ENCODE measurements at regions of chr4 and their contacts with region 1.

Region 1: DNA sequence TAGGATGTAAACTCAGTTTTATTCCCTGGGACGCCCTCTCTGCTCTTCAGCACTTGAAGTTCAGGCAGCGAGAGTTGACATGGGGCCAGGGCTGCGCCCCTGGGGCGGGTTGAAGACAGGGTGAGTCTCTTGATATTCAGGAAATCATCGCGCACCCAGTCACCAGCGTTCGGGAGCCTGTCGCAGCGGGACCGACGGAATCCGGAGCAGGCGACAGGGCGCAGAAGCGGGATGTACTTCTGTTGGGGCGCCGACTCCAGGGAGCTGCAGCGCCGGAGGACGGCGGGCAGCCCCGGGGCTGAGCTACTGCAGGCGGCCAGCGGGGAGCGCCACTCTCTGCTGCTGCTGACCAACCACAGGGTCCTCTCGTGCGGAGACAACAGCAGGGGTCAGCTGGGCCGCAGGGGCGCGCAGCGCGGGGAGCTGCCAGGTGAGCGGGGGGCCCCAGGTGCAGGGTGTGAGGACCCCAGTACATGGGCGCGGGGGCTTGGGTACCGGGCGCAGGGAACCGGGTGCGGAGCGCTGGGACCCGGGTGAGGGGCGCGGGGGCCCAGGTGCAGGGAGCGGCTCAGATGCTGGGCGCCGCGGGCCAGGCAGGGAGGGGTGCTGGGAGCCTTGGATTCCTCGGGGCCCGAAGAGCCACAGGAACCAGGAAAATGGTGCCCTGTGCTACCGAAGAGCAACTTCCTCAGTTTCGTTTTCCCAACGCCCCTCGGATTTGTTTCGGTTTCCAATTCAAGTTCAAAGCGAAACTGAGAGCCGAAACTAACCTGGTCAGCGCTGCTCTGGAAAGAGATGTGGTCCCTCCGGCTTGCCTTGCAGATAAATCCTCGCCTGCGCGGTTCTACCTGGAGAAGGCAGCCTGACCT is at the start of gene HERC6:
- DNase-seq: peak; percentile 95
- H3K4me3 Mint-ChIP-seq: peak within 1 kb of the TSS; percentile 86
- H3K27ac Mint-ChIP-seq: peak within 1 kb of the TSS; percentile 83
- H3K4me1 Mint-ChIP-seq: peaks cover 43% of the 10 kb centered on the region
- H3K27me3 Mint-ChIP-seq: no peaks in the 10 kb centered on the region
- total RNA-seq, gene HERC6: 5.3 and 6.4 TPM in 2 replicates

Region 2: GRCh38 chr4:88007304-88008121 is 371.4 kb before region 1 on chr4 and contains the start of gene PKD2:
- intact Hi-C with region 1: loop called (anchors 10 kb)
- DNase-seq: peak; percentile 96
- H3K4me3 Mint-ChIP-seq: peak within 1 kb of the TSS; percentile 94
- H3K27ac Mint-ChIP-seq: peak within 1 kb of the TSS; percentile 88
- H3K4me1 Mint-ChIP-seq: peaks cover 31% of the 10 kb centered on the region
- H3K27me3 Mint-ChIP-seq: peaks cover 16% of the 10 kb centered on the region
- total RNA-seq, gene PKD2: 10.1 and 12.3 TPM in 2 replicates

Region 3: DNA sequence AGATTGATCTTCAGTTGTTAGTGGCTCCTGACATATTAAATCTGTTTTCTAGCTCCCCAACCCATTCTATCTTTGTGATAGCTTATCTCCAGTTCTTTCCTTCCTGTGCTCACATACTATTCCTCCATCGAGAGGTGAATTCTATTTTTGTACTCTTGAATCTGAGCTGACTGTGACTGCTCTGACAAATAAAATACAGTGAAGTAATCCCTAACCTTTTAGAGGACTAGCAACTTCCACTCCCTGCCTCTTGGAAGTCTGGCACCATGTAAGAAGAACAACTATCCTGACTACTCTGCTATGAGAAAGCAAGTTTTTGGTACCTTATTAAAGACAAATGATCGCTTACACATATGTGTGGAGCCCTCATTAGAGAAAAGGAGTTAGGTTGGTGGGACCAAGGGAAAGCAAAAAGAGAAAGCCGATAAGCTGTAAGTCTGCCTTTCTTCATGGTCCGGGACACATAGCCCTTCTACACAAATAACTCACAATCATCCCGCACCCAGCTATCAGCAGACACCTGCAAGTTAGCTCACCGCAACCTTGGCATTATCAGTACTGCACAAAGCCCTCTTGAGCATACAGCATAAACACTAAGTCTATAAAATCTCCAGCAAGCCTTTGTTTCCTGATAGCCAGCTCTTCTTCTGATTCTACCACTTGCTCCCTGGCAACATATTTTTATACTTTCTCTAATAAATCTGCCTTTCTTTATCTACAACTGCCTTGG is 81.0 kb before region 1 on chr4:
- intact Hi-C with region 1: no loop called
- DNase-seq: no peak
- H3K4me3 Mint-ChIP-seq: no peak overlapping the region
- H3K27ac Mint-ChIP-seq: no peak overlapping the region
- H3K4me1 Mint-ChIP-seq: no peaks in the 10 kb centered on the region
- H3K27me3 Mint-ChIP-seq: no peaks in the 10 kb centered on the region

Region 4: GRCh38 chr4:88398381-88398780 is 19.5 kb after region 1 on chr4:
- intact Hi-C with region 1: no loop called
- DNase-seq: no peak
- H3K4me3 Mint-ChIP-seq: no peak overlapping the region
- H3K27ac Mint-ChIP-seq: no peak overlapping the region
- H3K4me1 Mint-ChIP-seq: no peaks in the 10 kb centered on the region
- H3K27me3 Mint-ChIP-seq: no peaks in the 10 kb centered on the region

Region 5: DNA sequence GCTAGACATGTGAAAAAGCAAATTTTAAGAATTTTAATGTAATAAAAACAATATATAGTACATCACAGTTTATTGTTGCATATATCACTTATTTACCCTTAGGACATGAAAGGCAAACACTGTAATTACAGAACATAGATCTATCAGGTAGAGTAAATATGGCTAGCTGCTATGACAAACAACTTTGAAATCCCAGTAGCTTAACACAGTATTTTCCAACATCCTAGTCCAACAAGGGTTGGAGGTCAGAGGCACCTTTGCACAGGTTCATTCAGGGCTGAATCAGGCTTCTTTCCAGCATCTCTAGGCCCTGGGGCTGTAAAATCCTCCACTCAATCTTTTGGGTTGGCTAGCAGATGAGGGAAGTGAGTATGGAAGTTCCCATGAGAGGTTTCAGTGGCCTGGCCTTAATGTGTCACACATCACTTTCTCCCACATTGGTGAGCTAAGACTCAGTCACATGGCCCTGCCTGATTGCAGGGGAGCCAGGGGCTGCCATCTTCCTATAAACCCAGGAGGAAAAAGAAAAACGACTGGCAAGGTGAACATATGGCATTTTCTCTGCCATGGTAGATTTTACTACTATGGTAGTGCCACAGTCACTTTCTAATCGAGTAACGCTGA is 32.7 kb after region 1 on chr4:
- intact Hi-C with region 1: loop called (anchors 2 kb)
- DNase-seq: no peak
- H3K4me3 Mint-ChIP-seq: no peak overlapping the region
- H3K27ac Mint-ChIP-seq: no peak overlapping the region
- H3K4me1 Mint-ChIP-seq: peaks cover 11% of the 10 kb centered on the region
- H3K27me3 Mint-ChIP-seq: no peaks in the 10 kb centered on the region

Region 6: GRCh38 chr4:88523325-88524129 is 144.6 kb after region 1 on chr4 and contains the start of gene PYURF:
- intact Hi-C with region 1: loop called (anchors 1 kb)
- DNase-seq: peak; percentile 94
- H3K4me3 Mint-ChIP-seq: peak within 1 kb of the TSS; percentile 98
- H3K27ac Mint-ChIP-seq: peak within 1 kb of the TSS; percentile 94
- H3K4me1 Mint-ChIP-seq: peaks cover 37% of the 10 kb centered on the region
- H3K27me3 Mint-ChIP-seq: no peaks in the 10 kb centered on the region
- total RNA-seq, gene PYURF: 54.6 and 57.0 TPM in 2 replicates

Region 7: GRCh38 chr4:88803600-88804096 is 424.7 kb after region 1 on chr4:
- intact Hi-C with region 1: loop called (anchors 5 kb)
- DNase-seq: peak; percentile 67
- H3K4me3 Mint-ChIP-seq: no peak overlapping the region
- H3K27ac Mint-ChIP-seq: no peak overlapping the region
- H3K4me1 Mint-ChIP-seq: peaks cover 17% of the 10 kb centered on the region
- H3K27me3 Mint-ChIP-seq: peaks cover 21% of the 10 kb centered on the region

Region 8: GRCh38 chr4:89294573-89295269 is 915.8 kb after region 1 on chr4:
- intact Hi-C with region 1: loop called (anchors 5 kb)
- DNase-seq: peak; percentile 81
- H3K4me3 Mint-ChIP-seq: peak overlapping the region; percentile 68
- H3K27ac Mint-ChIP-seq: peak overlapping the region; percentile 98
- H3K4me1 Mint-ChIP-seq: peaks cover 76% of the 10 kb centered on the region
- H3K27me3 Mint-ChIP-seq: no peaks in the 10 kb centered on the region

Measured in activated CD4-positive, alpha-beta T cell treated with anti-CD3 and anti-CD28 coated beads, Interleukin-2, amount 10 ng/mL, durations not matched to agents 24 days and 14 days (primary cell).